Panc1 (cell line): ENCODE measurements at regions of chr4 and their contacts with region 1.

Region 1: GRCh38 chr4:38730830-38731646 is 51.8 kb downstream of the TLR10 start:
- DNase-seq: peak; percentile 32
- ATAC-seq: peak; percentile 94
- H3K4me3 ChIP-seq: no peak overlapping the region
- H3K27ac ChIP-seq: no peak overlapping the region
- H3K4me1 ChIP-seq: peaks cover 3% of the 10 kb centered on the region; the same call in 1 of the 2 replicates
- H3K27me3 ChIP-seq: no peaks in the 10 kb centered on the region
- CTCF ChIP-seq: peak; percentile 89

Region 2: DNA sequence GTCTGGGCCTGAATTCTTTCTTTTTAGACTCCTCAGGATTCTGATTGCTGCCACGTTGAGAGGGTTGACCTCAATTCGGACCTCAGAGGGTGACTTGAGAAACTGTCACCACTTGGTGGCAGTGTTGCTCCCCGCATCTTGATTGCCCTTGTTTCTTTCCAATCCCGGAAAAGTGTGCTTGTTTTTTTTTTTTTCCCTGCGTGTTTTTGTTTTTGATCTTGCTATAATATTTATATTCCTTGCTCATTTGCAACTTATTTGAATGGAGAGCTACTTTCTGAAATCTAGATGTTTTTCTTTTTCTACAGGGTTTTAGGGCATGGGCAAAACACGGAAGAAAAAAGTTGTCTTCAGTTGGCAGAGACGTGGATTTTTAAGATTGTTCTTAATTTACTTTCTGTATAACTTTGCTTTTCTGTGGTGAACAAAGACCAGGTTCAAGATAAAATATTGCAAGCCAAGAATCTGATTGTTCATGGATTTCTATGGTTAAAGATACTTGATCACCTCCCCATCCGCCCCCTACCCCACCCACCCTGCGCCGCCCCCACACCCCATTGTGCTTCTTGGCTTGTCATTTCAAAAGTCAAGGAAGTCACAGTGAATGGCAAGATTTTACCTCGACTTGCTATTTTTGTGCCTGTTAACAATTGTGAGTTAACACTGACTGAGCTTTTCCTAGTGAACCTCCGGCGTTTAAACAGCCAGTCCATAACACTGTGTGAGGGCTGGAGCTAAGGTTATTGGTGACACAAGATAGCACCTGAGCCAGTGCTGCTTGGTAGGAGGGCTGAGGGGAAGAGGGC is 668.7 kb before region 1 on chr4:
- CTCF ChIA-PET with region 1: no interaction called
- POLR2A ChIA-PET with region 1: interaction called, 14 read pairs
- in situ Hi-C with region 1: no loop called
- intact Hi-C with region 1: loop called (anchors 5 kb)
- DNase-seq: peak; percentile 41
- ATAC-seq: peak; percentile 82; the same call in 1 of the 2 replicates
- H3K4me3 ChIP-seq: no peak overlapping the region
- H3K27ac ChIP-seq: no peak overlapping the region
- H3K4me1 ChIP-seq: no peaks in the 10 kb centered on the region
- H3K27me3 ChIP-seq: no peaks in the 10 kb centered on the region
- CTCF ChIP-seq: peak; percentile 84

Region 3: GRCh38 chr4:38179690-38180377 is 551.2 kb before region 1 on chr4:
- CTCF ChIA-PET with region 1: interaction called, 7 read pairs
- POLR2A ChIA-PET with region 1: no interaction called
- in situ Hi-C with region 1: no loop called
- intact Hi-C with region 1: loop called (anchors 2 kb)
- DNase-seq: no peak
- ATAC-seq: peak; percentile 90
- H3K4me3 ChIP-seq: no peak overlapping the region
- H3K27ac ChIP-seq: no peak overlapping the region
- H3K4me1 ChIP-seq: no peaks in the 10 kb centered on the region
- H3K27me3 ChIP-seq: no peaks in the 10 kb centered on the region
- CTCF ChIP-seq: peak; percentile 86